ENCODE measurements at regions of chr6 and their contacts with region 1.

Region 1: DNA sequence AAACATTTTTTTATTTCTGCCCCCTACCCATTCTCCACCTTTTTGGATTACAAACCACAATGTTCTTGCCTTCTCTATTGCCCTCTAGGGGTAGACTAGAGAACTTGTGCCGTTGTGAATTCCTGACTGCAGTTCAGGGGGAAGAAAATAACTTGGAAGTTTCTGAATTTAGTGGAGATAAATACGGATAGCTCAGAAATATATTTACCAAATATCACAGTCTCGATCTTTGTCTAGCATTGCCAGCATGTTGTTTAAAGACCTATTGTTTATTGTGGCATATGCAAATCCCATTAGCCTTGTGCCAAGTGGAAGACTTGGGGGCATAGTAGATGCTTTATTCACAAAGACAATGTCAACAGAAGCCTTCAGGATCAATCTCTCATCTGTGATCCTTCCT is 154.1 kb upstream of the MMS22L start:
- DNase-seq: peak; percentile 7
- H3K4me3 ChIP-seq: no peak overlapping the region
- H3K27ac ChIP-seq: no peak overlapping the region
- H3K4me1 ChIP-seq: no peaks in the 10 kb centered on the region
- H3K27me3 ChIP-seq: no peaks in the 10 kb centered on the region
- CTCF ChIP-seq: peak; percentile 85 to 93

Region 2: GRCh38 chr6:97068211-97068610 is 368.9 kb before region 1 on chr6:
- CTCF ChIA-PET with region 1: no interaction called
- dilution Hi-C with region 1: no loop called
- in situ Hi-C with region 1: no loop called
- intact Hi-C with region 1: loop called (anchors 5 kb)
- DNase-seq: peak; percentile 3
- H3K4me3 ChIP-seq: no peak overlapping the region
- H3K27ac ChIP-seq: no peak overlapping the region
- H3K4me1 ChIP-seq: no peaks in the 10 kb centered on the region
- H3K27me3 ChIP-seq: peaks cover 2% of the 10 kb centered on the region
- CTCF ChIP-seq: peak; percentile 41 to 58

Region 3: DNA sequence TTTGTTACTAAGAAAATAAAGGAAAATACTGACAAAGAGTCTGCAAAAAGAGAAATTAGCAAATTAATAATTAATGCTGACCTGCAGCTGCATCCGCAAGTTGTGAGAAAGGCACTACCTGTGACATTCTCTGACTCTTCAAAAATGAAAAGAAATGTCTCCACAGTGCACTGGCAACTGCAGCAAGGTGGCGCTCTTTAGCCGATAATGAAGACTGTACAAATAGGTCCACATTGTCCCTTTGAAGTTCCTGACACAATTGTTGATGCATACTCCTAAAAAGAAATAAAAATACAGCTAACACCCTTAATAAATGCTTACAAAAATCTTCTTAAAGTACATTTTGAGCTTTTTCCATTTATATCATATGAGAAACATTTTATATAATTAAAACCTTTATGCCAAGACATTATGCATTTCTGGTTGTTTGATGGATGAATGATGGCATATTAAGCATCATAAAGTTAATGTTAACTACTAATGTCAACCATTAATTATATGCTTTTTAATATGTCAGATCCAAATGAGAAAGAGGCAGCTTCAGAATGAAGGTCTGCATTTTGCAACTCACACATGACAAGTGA is 250.6 kb before region 1 on chr6:
- CTCF ChIA-PET with region 1: no interaction called
- dilution Hi-C with region 1: no loop called
- in situ Hi-C with region 1: no loop called
- intact Hi-C with region 1: loop called (anchors 1 kb)
- DNase-seq: peak; percentile 48
- H3K4me3 ChIP-seq: no peak overlapping the region
- H3K27ac ChIP-seq: no peak overlapping the region
- H3K4me1 ChIP-seq: no peaks in the 10 kb centered on the region
- H3K27me3 ChIP-seq: no peaks in the 10 kb centered on the region
- CTCF ChIP-seq: peak; percentile 87 to 97

Region 4: DNA sequence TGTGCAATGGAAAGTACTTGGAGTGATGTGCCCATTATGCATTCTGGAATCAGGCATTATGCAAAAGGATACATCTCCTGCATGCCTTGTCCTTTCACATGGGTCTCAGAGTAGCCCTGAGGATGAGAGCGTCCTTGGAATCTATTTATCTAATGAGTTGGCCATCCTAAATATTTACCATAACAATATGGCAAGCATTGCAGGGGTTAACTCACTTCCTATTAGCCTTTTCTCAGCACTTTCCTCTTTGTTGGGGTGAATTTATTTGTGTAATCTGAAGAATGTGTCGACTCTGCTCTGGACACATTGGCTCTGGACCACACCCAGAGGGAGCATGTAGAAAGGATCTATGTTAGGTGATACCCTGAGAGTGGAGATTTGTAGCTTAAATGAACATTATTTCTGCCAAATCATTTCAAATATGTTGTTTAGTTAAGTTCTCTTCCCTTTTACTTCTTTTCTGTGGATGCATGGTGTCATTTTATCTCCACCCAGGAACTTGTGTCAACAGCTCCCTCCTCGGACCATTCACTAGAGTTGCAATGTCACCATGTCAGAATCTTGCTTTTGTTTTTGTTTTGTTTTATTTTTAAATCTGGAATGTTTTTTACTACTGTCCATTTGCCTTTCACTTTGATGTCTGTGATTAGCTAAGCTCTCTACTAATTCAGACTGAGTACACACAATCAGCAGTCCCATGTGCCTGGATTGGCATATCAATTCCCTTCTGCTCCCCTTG is 603.0 kb after region 1 on chr6:
- CTCF ChIA-PET with region 1: interaction called, 8 read pairs
- dilution Hi-C with region 1: no loop called
- in situ Hi-C with region 1: no loop called
- intact Hi-C with region 1: loop called (anchors 5 kb)
- DNase-seq: peak; percentile 17
- H3K4me3 ChIP-seq: no peak overlapping the region
- H3K27ac ChIP-seq: no peak overlapping the region
- H3K4me1 ChIP-seq: no peaks in the 10 kb centered on the region
- H3K27me3 ChIP-seq: peaks cover 6% of the 10 kb centered on the region
- CTCF ChIP-seq: peak; percentile 21 to 49